Mammary epithelial cell (primary cell): ENCODE measurements at regions of chr6 and their contacts with region 1.

Region 1: GRCh38 chr6:144710237-144710636 is 425.1 kb downstream of the UTRN start:
- DNase-seq: peak; percentile 91
- H3K4me3 ChIP-seq: no peak overlapping the region
- H3K27ac ChIP-seq: peak overlapping the region; percentile 79
- H3K4me1 ChIP-seq: peaks cover 27% of the 10 kb centered on the region
- H3K27me3 ChIP-seq: no peaks in the 10 kb centered on the region
- CTCF ChIP-seq: no peak

Region 2: GRCh38 chr6:142913511-142914047 is 1796.7 kb before region 1 on chr6:
- CTCF ChIA-PET with region 1: no interaction called
- dilution Hi-C with region 1: no loop called
- in situ Hi-C with region 1: no loop called
- intact Hi-C with region 1: no loop called
- DNase-seq: no peak
- H3K4me3 ChIP-seq: no peak overlapping the region
- H3K27ac ChIP-seq: no peak overlapping the region
- H3K4me1 ChIP-seq: no peaks in the 10 kb centered on the region
- H3K27me3 ChIP-seq: no peaks in the 10 kb centered on the region
- CTCF ChIP-seq: no peak

Region 3: DNA sequence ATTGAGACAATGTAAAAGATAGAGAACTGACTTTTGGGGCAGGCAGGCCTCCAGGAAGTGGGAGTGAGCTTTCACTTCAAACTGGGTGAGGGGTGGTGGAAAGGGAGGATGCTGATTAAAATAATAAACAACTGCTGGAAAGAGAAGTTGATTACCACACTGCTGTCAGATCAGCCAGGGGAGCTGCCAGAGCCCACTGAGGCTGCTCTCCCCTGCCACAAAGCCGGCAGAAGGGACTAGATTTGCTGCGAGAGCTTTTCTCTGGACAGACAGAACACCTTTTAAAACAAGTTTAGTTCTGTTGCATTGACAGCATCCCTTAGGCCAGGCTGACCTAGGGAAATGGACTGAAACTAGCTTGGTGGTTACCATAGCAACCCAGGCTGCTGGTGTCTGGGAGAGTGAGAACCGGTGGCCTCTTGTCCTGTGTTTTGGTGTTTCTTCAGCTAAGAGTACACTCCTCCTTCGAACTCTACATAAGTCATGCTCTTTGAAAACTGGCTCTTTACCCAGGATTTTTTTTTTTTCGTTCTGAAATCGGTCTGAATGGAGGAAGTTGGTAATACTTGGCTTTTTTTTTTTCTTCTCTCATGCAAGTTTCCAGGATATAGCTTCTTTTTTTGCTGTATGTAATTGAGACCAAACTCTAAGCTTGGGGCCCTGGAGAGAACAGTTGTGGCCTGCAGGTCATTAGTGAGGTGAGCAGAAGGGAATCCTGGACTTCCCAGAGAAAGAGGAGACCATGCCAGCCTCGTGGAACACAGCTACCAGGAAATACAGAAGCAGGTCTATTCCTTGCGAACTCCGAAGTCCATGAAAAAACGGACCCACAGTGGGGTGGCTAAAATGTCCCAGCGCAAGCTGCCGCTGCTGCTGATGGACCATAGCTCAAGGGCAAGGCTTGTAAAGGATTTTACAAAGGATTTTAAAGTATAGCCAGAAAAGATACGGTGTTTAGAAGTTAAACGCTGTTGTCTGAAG is 50.7 kb before region 1 on chr6:
- CTCF ChIA-PET with region 1: no interaction called
- dilution Hi-C with region 1: no loop called
- in situ Hi-C with region 1: no loop called
- intact Hi-C with region 1: loop called (anchors 2 kb)
- DNase-seq: no peak
- H3K4me3 ChIP-seq: no peak overlapping the region
- H3K27ac ChIP-seq: no peak overlapping the region
- H3K4me1 ChIP-seq: peaks cover 45% of the 10 kb centered on the region
- H3K27me3 ChIP-seq: no peaks in the 10 kb centered on the region
- CTCF ChIP-seq: no peak